ENCODE measurements at regions of chr17 and their contacts with region 1.

Region 1: GRCh38 chr17:51120739-51121617 is at the start of gene SPAG9:
- DNase-seq: peak; percentile 79 to 96 (median 88)
- ATAC-seq: peak; percentile 84
- H3K4me3 ChIP-seq: peak within 1 kb of the TSS; percentile 96
- H3K4me3 Mint-ChIP-seq: peak within 1 kb of the TSS; percentile 94
- H3K27ac ChIP-seq: peak within 1 kb of the TSS; percentile 95
- H3K27ac Mint-ChIP-seq: peak within 1 kb of the TSS; percentile 98
- H3K4me1 ChIP-seq: peaks cover 38% of the 10 kb centered on the region
- H3K4me1 Mint-ChIP-seq: peaks cover 49% of the 10 kb centered on the region
- H3K27me3 ChIP-seq: no peaks in the 10 kb centered on the region
- H3K27me3 Mint-ChIP-seq: no peaks in the 10 kb centered on the region
- CTCF ChIP-seq: no peak
- total RNA-seq, gene SPAG9: 75.7 to 77.6 TPM

Region 2: DNA sequence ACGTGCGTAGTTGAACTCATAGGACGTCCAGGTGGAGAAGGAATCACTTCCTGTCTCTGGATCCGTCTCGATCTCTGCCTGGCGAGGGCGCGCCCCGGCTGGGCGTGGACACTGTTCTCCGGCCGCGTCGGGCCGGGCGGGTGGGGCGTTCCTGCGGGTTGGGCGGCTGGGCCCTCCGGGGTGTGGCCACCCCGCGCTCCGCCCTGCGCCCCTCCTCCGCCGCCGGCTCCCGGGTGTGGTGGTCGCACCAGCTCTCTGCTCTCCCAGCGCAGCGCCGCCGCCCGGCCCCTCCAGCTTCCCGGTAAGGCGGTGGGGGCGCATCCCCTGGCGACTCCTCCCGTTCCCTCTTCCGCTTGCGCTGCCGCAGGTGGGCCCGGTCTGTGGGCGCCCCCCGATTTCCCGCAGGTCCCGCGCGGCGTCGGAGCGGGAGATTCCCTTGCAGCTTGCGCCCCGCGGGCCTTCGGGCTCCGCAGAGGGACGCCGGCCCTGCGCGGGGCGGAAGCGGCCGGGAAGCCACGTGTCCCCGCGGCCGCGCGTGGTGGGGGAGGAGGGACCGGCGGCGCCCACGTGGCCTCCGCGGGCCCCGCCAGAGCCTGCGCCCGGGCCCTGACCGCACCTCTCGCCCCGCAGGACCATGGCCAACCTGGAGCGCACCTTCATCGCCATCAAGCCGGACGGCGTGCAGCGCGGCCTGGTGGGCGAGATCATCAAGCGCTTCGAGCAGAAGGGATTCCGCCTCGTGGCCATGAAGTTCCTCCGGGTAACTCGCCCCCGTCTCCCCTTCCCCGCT is 45.4 kb after region 1 on chr17 and contains the start of gene NME2:
- CTCF ChIA-PET with region 1: interaction called, 3 read pairs
- POLR2A ChIA-PET with region 1: interaction called, 4 read pairs
- intact Hi-C with region 1: loop called (anchors 5 kb)
- DNase-seq: peak; percentile 10 to 84 (median 59)
- ATAC-seq: peak; percentile 69
- H3K4me3 ChIP-seq: peak within 1 kb of the TSS; percentile 70 to 78
- H3K4me3 Mint-ChIP-seq: peak within 1 kb of the TSS; percentile 90
- H3K27ac ChIP-seq: peak within 1 kb of the TSS; percentile 52 to 84
- H3K27ac Mint-ChIP-seq: peak within 1 kb of the TSS; percentile 91
- H3K4me1 ChIP-seq: peaks cover 13% of the 10 kb centered on the region
- H3K4me1 Mint-ChIP-seq: peaks cover 23% of the 10 kb centered on the region
- H3K27me3 ChIP-seq: no peaks in the 10 kb centered on the region
- H3K27me3 Mint-ChIP-seq: no peaks in the 10 kb centered on the region
- CTCF ChIP-seq: no peak
- total RNA-seq, gene NME2: 165 to 168 TPM

Region 3: GRCh38 chr17:51238255-51238887 is 117.4 kb after region 1 on chr17:
- CTCF ChIA-PET with region 1: no interaction called
- POLR2A ChIA-PET with region 1: no interaction called
- intact Hi-C with region 1: no loop called
- DNase-seq: peak in 1 of 9 experiments; percentile 13
- ATAC-seq: no peak
- H3K4me3 ChIP-seq: no peak overlapping the region
- H3K4me3 Mint-ChIP-seq: peak overlapping the region; percentile 46
- H3K27ac ChIP-seq: no peak overlapping the region
- H3K27ac Mint-ChIP-seq: peak overlapping the region; percentile 53
- H3K4me1 ChIP-seq: peaks cover 11% of the 10 kb centered on the region
- H3K4me1 Mint-ChIP-seq: peaks cover 64% of the 10 kb centered on the region
- H3K27me3 ChIP-seq: no peaks in the 10 kb centered on the region
- H3K27me3 Mint-ChIP-seq: no peaks in the 10 kb centered on the region
- CTCF ChIP-seq: no peak

Measured in CD8-positive, alpha-beta T cell (primary cell).